Right ventricle myocardium superior (tissue), 1 donor: ENCODE measurements at regions of chr22 and their contacts with region 1.

Region 1: DNA sequence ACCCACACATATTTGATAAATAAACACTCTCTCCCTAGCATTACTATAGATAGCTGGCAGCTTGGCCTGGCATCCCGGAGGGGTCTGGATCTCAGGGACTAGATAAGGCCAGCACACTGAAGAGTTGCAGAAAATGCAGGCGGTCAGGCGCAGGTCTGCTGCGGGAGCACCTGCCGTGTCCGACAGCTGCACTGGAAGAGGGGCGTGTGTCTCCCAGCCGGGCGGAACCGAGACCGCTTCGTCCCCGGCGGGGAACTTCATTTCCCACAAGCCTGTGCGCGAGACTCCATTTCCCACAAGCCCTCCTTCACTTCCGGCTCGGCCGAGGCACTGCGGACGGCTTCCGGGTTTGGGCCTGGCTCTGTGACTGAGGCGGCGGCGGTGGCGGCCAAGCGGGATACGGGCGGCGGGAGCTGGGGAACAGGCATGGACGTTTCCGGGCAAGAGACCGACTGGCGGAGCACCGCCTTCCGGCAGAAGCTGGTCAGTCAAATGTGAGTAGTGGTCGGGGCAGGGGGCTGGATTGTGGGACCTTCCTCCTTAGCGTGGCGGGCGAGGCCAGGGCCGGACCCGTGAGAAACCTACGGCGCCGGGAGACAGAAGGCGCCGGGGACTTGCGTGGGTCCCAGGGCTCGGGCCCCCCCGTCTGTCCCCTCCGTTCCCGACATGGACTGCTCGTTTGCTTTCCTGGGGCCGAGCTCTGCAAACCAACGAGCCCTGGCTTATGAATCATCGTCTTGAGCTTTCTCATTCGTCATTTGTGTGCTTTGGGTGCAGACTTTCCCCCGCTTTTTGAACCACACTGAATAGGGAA is at the start of gene MED15:
- DNase-seq: peak; percentile 95
- ATAC-seq: peak; percentile 95
- total RNA-seq, gene MED15: 36.3 TPM

Region 2: DNA sequence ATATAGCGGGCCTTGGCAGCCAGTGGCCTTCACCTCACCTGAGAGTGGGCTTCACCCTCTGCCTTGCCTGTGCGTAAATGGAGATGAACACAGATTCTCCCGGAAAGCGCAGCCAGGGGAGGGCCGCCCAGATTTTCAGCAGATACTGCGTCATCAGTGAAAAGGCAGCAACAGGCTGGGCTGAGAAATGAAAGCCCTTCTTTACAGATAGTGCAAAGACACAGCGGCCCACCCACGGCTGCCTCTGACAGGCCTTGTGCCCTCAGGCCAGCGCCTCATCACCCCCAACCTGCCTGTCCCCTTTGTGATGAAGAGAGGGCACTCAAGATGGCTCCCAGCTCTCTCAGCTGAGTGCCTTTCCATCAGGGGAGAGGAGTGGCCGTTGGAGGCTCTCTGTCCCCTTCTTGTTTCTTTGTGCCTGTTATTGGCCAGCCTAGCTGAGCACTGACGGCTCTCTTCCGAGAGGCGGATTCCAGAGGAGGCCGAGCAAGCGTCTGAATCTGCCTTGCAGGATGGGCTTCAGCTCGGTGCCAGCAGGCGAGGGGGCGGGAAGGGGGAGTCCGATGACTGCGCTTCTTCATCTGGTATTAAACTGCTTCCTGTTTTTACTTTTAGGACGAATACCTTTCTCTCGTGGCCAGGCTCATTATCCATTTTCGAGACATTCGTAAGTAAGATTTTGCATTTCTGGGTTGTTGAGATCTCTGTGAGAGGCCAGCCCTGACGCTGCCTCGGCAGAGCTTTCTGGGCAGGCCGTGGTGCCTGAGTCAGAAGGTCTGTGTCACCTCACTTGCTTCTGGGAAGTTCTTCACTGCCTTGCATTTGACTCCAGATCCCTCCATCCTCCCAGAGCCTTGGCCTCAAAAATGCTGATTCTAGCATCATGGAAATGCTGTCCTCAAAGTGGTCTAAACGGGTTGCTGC is 43.6 kb after region 1 on chr22:
- intact Hi-C with region 1: loop called (anchors 5 kb)
- DNase-seq: no peak
- ATAC-seq: peak; percentile 24